Posterior cingulate gyrus (tissue), 11 donors: ENCODE measurements at regions of chr22 and their contacts with region 1.

Region 1: GRCh38 chr22:19970479-19971275 is 29.1 kb upstream of the TXNRD2 start:
- DNase-seq: peak; percentile 47 to 96 (median 77)

Region 2: GRCh38 chr22:20013382-20013871 is 42.8 kb after region 1 on chr22:
- intact Hi-C with region 1: loop called (anchors 1 kb)
- DNase-seq: peak; percentile 55 to 94 (median 68)

Region 3: GRCh38 chr22:20038574-20038973 is 67.9 kb after region 1 on chr22:
- intact Hi-C with region 1: loop called (anchors 1 kb)
- DNase-seq: peak in 1 of 10 donors; percentile 60